AG04449 (cell line): ENCODE measurements at regions of chr1 and their contacts with region 1.

Region 1: GRCh38 chr1:158087320-158087927 is 93.3 kb upstream of the CD1D start:
- DNase-seq: peak; percentile 10
- H3K4me3 ChIP-seq: no peak overlapping the region
- CTCF ChIP-seq: peak; percentile 83

Region 2: DNA sequence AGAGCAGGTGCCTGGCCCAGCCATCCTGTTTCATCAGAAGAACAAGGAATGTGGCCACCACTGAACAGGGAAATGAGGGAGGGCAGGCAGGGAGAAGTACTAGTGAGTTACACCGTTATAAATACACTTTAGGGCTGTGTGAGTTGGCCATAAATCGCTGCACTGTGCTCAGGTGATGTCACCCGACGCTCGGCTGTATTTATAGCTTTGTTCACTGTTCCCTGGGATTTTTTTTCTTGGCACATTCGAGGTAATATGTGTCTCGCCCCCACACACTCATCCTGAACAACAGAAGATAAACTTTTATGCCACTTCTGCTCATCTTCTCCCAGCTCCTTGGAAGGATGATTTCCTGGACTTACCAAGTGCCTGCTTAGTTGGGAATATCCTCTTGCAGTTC is 103.0 kb before region 1 on chr1:
- CTCF ChIA-PET with region 1: interaction called, 208 read pairs
- POLR2A ChIA-PET with region 1: no interaction called
- DNase-seq: no peak
- H3K4me3 ChIP-seq: no peak overlapping the region
- CTCF ChIP-seq: no peak

Region 3: DNA sequence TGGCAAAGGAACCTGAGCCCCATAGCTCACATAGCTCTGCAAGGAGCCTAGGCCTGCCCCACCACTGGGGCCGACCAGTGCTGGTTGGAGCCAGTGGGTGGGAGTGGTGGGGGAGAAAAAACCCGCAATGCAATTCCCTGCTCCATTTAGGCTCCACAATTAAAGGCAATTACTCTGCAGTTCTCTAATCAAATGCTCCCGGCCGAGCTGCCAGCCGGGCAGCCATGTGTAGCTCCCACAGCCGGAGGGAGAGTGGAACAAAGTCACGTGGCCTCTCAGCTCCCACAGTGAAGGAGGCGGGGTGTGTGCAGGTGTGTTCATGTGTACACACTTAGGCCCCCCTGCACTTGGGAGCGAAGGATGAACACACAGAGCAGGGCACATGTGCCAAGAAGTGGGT is 12.3 kb before region 1 on chr1:
- CTCF ChIA-PET with region 1: interaction called, 33 read pairs
- POLR2A ChIA-PET with region 1: no interaction called
- DNase-seq: no peak
- H3K4me3 ChIP-seq: no peak overlapping the region
- CTCF ChIP-seq: no peak

Region 4: DNA sequence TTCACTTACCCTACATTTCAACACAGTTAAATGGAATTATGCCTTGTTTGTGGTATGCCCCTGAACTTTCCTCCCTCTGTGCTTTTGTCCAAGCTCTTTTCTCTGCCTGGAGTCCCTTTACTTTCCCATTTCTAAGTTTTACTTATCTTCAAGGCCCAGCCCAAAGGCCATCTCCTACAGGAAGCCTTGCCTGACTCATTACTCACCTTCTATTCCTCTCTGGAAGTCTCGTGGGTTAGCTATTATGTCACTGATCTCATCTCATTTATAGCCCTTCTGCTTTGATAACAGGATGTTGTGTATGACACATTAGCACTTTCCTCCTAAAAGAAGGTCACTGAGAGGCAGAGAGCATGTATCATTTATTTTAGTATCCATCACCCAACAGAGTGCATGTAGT is 14.5 kb after region 1 on chr1:
- CTCF ChIA-PET with region 1: interaction called, 58 read pairs
- POLR2A ChIA-PET with region 1: no interaction called
- DNase-seq: no peak
- H3K4me3 ChIP-seq: no peak overlapping the region
- CTCF ChIP-seq: no peak

Region 5: DNA sequence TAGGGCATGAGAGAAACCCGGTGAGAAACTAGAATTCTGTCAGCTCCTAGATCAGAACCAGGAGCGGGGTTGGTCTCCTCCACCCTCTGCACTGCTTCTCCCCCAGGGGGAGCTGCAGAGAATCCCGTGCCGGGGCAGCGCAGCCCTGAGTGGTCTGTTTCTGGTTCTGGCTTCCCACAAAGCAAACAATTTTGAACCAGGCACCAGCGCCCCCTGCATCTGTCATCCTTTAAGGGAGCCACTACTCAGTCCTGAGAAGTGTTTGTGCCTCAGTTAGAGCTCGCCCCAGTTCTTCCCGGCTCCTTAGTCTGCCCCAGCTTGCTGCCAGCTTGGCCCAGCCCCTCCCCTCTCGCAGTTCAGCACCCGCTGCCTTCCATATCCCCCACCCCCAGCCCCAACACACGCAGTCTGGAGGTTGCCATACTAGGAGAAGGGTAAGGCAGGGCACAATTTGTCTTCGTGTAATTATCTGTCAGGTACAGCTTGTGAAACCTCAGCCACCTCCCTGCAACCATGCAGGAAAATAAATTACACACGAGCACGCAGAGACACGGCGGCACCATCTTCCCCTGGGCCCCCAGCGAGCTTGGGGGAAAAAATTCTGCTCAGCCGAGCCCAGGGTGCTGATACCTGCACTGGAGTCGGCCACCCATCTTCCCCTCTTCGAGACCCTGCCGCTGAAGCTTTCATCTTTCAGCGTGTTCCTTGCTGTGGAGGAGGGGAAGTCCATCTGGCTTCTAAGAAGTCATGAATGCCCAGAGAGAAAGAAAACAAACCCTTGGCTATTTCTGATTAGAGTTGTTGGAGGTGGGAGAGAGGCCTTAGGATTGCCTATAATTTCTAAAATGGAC is 30.7 kb after region 1 on chr1:
- CTCF ChIA-PET with region 1: interaction called, 588 read pairs
- POLR2A ChIA-PET with region 1: no interaction called
- DNase-seq: no peak
- H3K4me3 ChIP-seq: peak overlapping the region; percentile 24
- CTCF ChIP-seq: peak; percentile 77